ENCODE measurements at regions of chr10 and their contacts with region 1.

Region 1: DNA sequence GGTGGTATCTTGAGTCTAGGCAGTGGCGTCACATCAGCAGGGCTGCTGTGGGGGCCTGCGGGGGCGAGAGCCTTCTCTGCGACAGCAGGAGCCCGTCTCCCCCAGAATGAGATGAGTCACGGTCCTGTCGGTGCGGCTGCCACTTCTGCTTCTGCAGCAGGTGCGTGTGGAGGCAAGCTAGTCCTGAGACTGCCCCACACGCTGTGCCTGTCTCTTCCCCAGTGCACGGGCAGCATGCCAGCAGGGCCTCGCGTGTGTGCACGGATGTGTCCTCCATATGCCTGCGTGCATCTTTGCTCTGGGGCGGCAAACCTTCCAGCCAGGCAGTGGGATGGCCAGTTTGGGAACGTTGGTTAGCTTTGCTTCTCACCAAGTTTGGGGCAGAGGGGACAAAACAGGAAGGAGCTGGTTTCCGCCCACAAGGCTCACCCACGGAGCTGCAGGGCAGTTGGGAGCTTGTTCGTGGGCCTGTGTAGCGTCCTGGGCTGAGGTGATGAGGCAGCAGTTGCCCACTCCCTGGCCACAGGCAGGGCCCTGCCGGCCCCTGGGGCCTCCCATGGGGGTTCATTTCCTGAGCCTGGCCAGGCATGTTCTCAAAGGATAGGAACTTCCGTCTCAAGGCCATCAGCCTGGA is 60.8 kb upstream of the PPIF start:
- DNase-seq: peak; percentile 81
- ATAC-seq: peak; percentile 89
- H3K4me3 Mint-ChIP-seq: peak overlapping the region; percentile 78
- H3K27ac Mint-ChIP-seq: peak overlapping the region; percentile 97
- H3K4me1 Mint-ChIP-seq: peaks cover 79% of the 10 kb centered on the region
- H3K27me3 Mint-ChIP-seq: no peaks in the 10 kb centered on the region
- CTCF ChIP-seq: no peak

Region 2: DNA sequence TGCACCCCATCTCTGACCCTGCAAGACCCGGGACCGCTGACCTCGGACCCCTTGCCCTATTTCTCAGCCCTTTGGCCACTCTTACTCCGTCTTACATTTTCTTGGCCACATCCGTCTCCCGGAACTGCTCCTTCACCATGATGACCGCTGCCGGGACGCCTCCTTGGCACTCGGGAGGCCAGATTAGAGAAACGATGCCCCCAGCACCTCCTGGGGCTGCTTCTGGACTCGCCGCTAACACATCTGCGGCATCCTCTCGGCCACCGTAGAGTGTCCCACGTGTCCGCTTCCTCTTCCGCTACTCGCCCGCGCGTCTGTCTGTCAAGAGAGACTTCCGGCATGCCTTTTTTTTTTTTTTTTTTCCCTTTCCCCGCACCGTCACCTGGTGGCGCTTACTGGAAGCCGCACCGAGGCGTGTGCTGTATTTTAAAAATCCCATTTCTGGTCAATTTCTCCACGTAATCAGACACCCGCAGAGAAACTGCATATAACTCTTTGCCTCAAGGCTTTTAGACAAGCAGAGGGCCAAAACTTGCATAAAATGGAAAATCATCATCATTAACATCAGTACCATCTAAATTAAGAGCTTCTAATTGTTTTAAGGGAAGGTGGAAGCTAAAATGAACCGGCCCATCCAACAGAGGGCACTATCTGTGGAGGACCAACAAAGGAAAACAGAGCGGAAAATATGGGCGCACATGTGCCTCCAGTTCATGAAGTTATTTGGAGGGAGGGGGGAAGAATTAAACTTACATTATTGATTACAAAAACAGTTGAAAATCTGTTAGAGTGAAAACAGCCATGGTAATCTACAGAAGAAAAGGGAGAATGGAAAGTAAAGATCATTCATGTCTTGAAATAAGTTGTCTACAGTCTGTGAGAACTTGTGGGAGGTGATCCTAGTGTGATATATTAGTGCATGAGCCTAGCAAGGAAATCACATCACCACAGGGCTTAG is 1256.9 kb before region 1 on chr10 and contains the start of gene POLR3A:
- CTCF ChIA-PET with region 1: no interaction called
- POLR2A ChIA-PET with region 1: no interaction called
- intact Hi-C with region 1: loop called (anchors 1 kb)
- DNase-seq: peak; percentile 85
- ATAC-seq: peak; percentile 57
- H3K4me3 Mint-ChIP-seq: peak within 1 kb of the TSS; percentile 99
- H3K27ac Mint-ChIP-seq: peak within 1 kb of the TSS; percentile 88
- H3K4me1 Mint-ChIP-seq: peaks cover 43% of the 10 kb centered on the region
- H3K27me3 Mint-ChIP-seq: no peaks in the 10 kb centered on the region
- CTCF ChIP-seq: no peak
- total RNA-seq, gene POLR3A: 17.0 and 20.3 TPM in 2 replicates

Region 3: GRCh38 chr10:78510566-78511323 is 775.7 kb before region 1 on chr10:
- CTCF ChIA-PET with region 1: no interaction called
- POLR2A ChIA-PET with region 1: no interaction called
- intact Hi-C with region 1: no loop called
- DNase-seq: no peak
- ATAC-seq: no peak
- H3K4me3 Mint-ChIP-seq: no peak overlapping the region
- H3K27ac Mint-ChIP-seq: no peak overlapping the region
- H3K4me1 Mint-ChIP-seq: no peaks in the 10 kb centered on the region
- H3K27me3 Mint-ChIP-seq: peaks cover 11% of the 10 kb centered on the region
- CTCF ChIP-seq: no peak

Region 4: GRCh38 chr10:78820007-78820362 is 466.4 kb before region 1 on chr10:
- CTCF ChIA-PET with region 1: no interaction called
- POLR2A ChIA-PET with region 1: no interaction called
- intact Hi-C with region 1: no loop called
- DNase-seq: no peak
- ATAC-seq: no peak
- H3K4me3 Mint-ChIP-seq: no peak overlapping the region
- H3K27ac Mint-ChIP-seq: no peak overlapping the region
- H3K4me1 Mint-ChIP-seq: no peaks in the 10 kb centered on the region
- H3K27me3 Mint-ChIP-seq: peaks cover 5% of the 10 kb centered on the region
- CTCF ChIP-seq: no peak

Region 5: DNA sequence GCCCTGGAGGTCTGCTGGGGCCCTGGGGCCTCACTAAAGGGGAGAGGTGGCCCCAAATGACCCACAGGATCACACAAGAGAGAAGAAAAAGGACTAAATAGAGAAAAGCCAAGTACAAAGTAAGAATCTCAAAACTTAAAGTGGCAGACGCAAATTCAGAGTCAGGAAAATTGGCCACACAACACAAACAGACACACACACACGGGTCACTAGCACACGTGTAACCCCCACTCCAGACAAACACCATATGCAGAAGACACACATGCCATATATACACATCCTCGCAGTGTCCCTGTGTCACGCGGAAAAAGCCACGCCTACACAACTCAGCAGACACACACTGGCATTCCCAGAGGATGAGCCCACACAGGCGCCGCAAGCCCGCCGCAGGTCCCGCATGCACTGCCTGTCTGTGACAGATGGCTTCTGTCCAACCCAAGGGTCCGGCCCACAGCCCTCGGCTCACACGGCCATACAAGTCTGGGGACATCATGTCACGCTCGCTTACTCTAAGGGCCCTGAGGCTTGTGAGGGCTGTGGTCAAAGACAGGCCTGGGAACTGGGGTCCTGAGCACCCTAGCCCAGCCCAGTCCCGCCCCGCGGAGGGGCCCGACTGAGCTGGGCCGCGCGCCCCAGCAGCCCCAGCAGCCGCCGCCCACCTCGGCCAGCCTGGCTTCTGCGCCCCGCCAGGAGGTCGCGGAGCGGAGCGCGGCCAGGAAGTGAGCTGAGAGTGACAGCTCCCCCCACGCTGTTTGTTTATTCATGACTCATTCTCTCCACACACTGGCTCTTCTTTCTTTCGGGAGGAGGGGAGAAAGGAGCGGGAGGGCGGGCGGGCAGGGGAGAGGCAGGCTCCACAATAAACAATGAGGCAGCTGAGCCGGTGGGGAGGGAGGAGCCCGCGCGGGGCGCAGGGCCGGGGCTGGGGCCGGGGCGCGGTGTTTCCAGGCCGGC is 313.2 kb before region 1 on chr10:
- CTCF ChIA-PET with region 1: no interaction called
- POLR2A ChIA-PET with region 1: no interaction called
- intact Hi-C with region 1: loop called (anchors 5 kb)
- DNase-seq: peak; percentile 41
- ATAC-seq: peak; percentile 61
- H3K4me3 Mint-ChIP-seq: peak overlapping the region; percentile 73
- H3K27ac Mint-ChIP-seq: no peak overlapping the region
- H3K4me1 Mint-ChIP-seq: peaks cover 14% of the 10 kb centered on the region
- H3K27me3 Mint-ChIP-seq: peaks cover 52% of the 10 kb centered on the region
- CTCF ChIP-seq: no peak

Region 6: DNA sequence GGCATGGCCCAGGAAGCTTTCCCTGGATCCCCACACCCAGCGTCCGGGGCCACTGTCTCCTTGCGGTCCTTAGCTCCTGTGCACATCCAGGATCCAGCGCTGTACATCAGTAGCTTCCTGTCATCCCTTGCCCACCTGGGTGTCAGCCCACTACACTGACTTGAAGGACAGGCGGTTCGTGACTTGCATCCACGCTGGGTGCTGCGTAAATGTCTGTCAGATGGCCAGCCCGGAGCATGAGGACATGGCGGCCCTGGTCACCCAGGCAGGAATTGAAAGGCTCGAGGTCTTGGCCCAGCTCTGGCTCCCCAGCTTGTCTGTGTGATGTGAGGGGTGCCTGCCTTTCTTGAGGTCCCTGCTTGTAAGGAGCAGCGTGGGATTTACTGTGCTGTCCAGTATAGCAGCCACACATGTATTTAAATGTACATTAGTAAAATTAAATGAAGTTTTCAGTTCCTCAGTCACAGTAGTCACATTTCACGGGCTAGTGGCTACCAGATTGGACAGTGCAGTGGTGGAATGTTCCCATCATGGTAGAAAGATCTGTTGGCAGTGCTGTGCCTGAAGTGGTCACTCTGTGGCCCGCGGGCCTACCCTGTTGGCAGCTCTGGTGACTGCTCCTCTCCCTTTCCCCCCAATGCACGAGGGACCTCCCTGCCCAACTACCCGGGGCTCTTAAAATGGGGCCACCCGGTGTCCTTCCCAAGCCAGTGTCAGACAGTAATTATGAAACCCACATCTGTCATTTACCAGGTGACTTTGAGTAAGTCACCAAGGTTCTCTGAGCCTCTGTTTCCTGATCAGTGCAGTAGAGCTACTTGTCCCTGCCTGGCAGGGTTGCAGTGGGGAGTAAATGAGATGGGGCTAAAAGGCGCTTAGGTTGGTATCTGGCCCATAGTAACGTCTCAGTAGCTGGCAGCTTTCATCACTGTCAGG is 37.0 kb before region 1 on chr10:
- CTCF ChIA-PET with region 1: interaction called, 15 read pairs
- POLR2A ChIA-PET with region 1: interaction called, 350 read pairs
- intact Hi-C with region 1: loop called (anchors 1 kb)
- DNase-seq: peak; percentile 68
- ATAC-seq: peak; percentile 57
- H3K4me3 Mint-ChIP-seq: peak overlapping the region; percentile 79
- H3K27ac Mint-ChIP-seq: peak overlapping the region; percentile 98
- H3K4me1 Mint-ChIP-seq: peaks cover 100% of the 10 kb centered on the region
- H3K27me3 Mint-ChIP-seq: no peaks in the 10 kb centered on the region
- CTCF ChIP-seq: no peak

Region 7: DNA sequence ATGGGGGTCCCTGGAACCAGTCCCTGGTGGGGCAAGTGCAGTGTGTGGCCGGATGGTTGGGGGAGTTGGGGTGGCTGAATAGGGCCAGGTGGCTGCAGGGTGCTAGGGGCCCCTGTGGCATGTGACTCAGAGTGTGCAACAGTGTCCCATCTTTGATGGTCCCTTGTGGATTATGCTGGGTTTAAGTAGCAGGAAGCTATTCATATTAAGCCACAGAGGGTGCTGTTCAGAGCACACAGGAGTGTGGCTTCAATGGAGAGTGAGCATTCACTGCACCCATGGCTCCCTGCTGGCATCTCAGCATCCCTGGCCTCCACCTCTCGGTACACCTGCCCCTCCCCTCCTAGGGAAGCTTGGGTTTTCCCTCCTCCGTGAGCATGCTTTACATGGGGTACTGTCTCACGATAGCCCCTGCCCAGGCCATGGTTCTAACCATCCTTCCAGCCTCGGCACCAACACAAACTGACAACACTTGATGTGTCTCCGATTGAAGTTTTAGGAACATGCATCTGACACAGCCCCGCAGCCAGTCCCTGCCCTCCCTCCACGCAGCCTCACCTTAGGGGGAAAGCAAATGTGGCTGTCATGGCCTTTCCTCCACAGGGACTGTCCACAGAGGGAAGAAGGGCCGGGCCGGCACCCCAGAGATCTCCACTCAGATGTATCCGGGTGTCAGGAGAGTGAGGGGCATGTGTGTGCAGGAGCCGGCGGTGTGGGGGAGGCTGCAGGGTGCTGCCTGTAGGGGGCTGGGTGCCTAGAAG is 30.4 kb after region 1 on chr10:
- CTCF ChIA-PET with region 1: interaction called, 4 read pairs
- POLR2A ChIA-PET with region 1: interaction called, 37 read pairs
- intact Hi-C with region 1: loop called (anchors 1 kb)
- DNase-seq: peak; percentile 39
- ATAC-seq: peak; percentile 89
- H3K4me3 Mint-ChIP-seq: peak overlapping the region; percentile 48
- H3K27ac Mint-ChIP-seq: peak overlapping the region; percentile 56
- H3K4me1 Mint-ChIP-seq: peaks cover 43% of the 10 kb centered on the region
- H3K27me3 Mint-ChIP-seq: no peaks in the 10 kb centered on the region
- CTCF ChIP-seq: no peak

Region 8: GRCh38 chr10:79422178-79422892 is 135.9 kb after region 1 on chr10:
- CTCF ChIA-PET with region 1: no interaction called
- POLR2A ChIA-PET with region 1: no interaction called
- intact Hi-C with region 1: no loop called
- DNase-seq: no peak
- ATAC-seq: no peak
- H3K4me3 Mint-ChIP-seq: no peak overlapping the region
- H3K27ac Mint-ChIP-seq: no peak overlapping the region
- H3K4me1 Mint-ChIP-seq: peaks cover 5% of the 10 kb centered on the region
- H3K27me3 Mint-ChIP-seq: no peaks in the 10 kb centered on the region
- CTCF ChIP-seq: no peak

Region 9: DNA sequence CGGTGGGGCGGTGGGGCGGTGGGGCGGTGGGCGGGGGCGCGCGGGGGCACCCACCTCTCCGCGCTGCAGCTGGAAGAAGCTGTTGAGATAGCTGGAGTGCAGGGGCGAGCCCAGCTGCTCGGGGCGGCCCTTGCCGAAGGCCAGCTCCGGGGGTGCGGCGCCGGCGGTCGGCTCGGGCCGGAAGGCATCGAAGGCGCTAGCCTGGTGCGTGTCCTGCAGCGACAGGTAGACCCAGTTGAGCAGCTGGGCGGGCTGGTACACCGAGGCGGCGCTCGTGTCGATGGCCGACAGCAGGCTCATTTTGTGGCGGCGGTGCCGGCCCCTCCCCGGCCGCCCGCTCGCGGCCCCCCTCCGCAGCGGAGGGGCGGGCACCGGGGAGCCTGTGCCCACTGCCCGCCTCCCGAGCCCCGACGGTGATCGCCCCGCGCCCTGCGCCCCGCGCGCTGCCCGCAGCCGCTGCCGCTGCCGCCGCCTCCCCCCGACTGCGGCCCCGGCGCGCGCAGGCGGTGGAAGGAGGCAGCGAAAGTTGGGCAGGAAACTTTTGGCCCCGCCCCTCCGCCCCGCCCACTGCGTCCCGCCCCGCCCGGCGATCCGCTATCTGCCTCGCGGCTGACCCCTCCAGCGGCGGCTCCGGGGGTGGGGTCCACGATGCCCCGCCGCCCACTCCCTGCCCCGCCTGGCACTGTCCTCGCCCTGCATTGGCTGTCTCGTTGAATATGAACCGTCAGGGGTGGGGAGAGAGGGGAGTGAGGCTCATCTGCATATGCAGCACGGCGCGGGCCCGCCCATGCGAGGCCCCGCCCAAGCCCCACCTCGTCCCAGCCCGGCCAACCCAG is 158.9 kb after region 1 on chr10 and contains the start of gene ZCCHC24:
- CTCF ChIA-PET with region 1: no interaction called
- POLR2A ChIA-PET with region 1: no interaction called
- intact Hi-C with region 1: loop called (anchors 5 kb)
- DNase-seq: peak; percentile 92
- ATAC-seq: peak; percentile 93
- H3K4me3 Mint-ChIP-seq: peak within 1 kb of the TSS; percentile 87
- H3K27ac Mint-ChIP-seq: peak within 1 kb of the TSS; percentile 50
- H3K4me1 Mint-ChIP-seq: peaks cover 26% of the 10 kb centered on the region
- H3K27me3 Mint-ChIP-seq: peaks cover 2% of the 10 kb centered on the region
- CTCF ChIP-seq: no peak
- total RNA-seq, gene ZCCHC24: 1.1 and 1.3 TPM in 2 replicates

Measured in activated B cell treated with CpG ODN at 0.5 μM for 24 hours (primary cell).